Activated naive CD4-positive, alpha-beta T cell treated with anti-CD3 and anti-CD28 coated beads, Interleukin-2, amount 10 ng/mL, durations not matched to agents 7 days and 5 days (primary cell): ENCODE measurements at regions of chr17 and their contacts with region 1.

Region 1: DNA sequence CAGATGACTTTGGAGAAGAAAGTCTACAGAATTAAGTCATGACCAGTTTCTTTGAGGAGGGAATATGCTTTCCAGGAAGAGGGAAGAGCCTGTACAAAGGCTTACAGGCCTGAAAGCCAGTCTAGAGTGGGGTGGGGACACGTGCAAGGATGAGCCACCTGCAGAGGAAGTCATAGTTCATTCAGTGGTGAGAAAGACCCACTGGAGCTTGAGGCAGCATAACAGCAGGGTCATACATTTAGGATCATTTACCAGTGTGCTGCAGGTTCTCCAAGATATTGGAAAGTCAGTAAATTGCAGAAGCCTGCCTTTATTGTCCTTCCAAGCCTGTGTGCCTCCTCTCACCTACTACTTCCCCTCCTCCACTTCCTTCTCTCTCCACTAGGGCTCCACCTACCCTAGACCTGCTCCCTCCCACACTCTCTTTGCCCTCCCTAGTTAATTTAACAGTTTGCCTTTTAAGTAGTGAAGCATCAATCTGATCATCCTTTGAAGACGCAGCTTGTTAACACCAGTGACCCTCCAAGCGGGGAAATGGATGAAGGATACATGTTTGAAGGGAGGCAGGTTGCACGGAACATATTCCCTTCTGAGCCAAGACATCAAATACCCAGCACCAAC is 40.2 kb downstream of the CDRT15 start:
- DNase-seq: no peak
- H3K4me3 Mint-ChIP-seq: peak overlapping the region; percentile 59
- H3K27ac Mint-ChIP-seq: peak overlapping the region; percentile 100
- H3K4me1 Mint-ChIP-seq: peaks cover 87% of the 10 kb centered on the region
- H3K27me3 Mint-ChIP-seq: no peaks in the 10 kb centered on the region

Region 2: DNA sequence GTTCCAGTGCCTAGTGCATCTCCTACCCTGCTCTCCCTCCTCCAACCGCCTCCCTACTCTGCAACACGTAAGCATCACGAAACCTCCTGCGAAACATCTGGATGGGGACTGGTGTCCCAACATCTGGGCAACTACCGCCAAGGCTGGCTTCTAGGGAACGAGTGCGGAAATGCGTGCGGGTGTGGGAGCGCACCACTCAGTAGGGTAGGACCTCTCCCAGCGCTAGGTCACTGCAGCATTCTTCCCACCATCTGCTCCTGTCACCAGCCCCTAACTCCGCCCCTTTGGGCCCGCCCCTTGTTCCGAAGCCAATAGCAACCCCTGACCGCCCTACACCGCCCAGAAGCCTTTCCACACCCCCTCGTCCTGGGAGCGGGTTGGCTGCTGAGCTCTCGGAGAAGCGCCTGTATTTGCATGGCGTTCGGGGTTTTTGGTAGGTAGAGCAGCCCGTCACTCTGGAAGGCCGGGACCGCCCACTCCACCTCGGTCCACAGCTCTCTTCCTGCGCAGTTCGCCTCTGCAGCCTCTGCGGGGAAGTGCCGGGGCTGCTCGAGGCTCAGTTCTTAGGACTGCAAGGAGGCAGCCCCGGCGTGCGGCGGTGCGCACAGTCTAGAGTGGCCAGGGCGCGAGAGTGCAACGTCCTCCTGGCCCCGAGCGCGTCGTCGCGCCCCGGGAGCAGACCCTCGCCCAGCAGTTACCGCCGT is 104.2 kb after region 1 on chr17 and contains the start of gene HS3ST3B1:
- CTCF ChIA-PET with region 1: interaction called, 10 read pairs
- DNase-seq: peak; percentile 100
- H3K4me3 Mint-ChIP-seq: peak within 1 kb of the TSS; percentile 97
- H3K27ac Mint-ChIP-seq: peak within 1 kb of the TSS; percentile 96
- H3K4me1 Mint-ChIP-seq: peaks cover 64% of the 10 kb centered on the region
- H3K27me3 Mint-ChIP-seq: peaks cover 57% of the 10 kb centered on the region

Region 3: DNA sequence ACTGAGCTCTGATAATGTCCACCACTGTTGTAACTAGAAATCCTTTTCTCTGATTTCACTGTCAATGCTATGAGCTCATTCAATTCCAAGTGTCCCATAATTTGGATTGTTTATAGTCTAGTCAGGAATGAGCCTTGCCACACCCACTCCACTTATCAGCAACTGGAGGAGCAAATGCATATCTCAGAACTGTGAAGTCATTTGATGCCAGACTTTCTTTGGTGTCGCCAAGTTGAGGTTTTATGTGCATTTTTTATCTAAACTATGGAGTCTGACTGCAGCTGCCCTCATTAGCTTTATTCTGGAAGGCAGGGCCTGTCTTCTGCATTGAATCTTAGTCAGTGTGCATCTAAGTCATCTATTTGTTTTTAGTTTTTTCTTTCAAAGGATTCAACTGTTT is 707.4 kb after region 1 on chr17:
- CTCF ChIA-PET with region 1: no interaction called
- DNase-seq: no peak
- H3K4me3 Mint-ChIP-seq: no peak overlapping the region
- H3K27ac Mint-ChIP-seq: no peak overlapping the region
- H3K4me1 Mint-ChIP-seq: no peaks in the 10 kb centered on the region
- H3K27me3 Mint-ChIP-seq: peaks cover 4% of the 10 kb centered on the region